ENCODE measurements at regions of chr1 and their contacts with region 1.

Region 1: DNA sequence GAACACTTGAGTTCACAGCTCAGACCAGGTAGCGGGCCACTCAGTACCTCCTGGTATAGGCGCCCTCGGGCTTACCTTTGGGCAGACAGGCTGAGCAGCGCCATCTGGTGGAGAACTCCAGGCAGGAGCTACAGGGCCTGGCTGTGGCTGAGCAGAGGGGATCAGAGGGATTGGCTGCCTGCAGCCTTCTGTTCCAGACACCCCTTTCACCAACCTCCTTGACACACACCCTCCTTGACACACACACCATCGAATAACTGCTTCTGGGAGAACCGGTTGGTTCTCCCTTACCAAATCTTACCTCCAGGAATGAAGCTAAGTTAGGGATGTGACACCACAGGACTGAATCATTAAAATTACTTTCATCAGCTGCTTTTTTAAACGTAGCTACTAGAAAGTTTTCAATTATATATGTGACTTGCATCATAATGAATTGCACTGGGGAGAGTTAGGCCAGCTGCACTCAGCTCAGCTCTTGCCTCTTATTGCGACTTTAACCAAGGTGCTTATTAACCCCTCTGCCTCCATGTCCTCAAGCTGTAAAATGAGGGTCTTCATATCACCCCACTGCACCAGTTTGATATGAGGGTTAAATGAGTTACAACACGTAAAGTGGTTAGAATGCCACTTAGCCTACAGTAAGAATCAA is 6.6 kb downstream of the LIN28A start:
- DNase-seq: peak; percentile 90
- ATAC-seq: peak; percentile 99
- H3K4me3 Mint-ChIP-seq: no peak overlapping the region
- H3K27ac Mint-ChIP-seq: no peak overlapping the region
- H3K4me1 Mint-ChIP-seq: peaks cover 2% of the 10 kb centered on the region
- H3K27me3 Mint-ChIP-seq: peaks cover 57% of the 10 kb centered on the region

Region 2: DNA sequence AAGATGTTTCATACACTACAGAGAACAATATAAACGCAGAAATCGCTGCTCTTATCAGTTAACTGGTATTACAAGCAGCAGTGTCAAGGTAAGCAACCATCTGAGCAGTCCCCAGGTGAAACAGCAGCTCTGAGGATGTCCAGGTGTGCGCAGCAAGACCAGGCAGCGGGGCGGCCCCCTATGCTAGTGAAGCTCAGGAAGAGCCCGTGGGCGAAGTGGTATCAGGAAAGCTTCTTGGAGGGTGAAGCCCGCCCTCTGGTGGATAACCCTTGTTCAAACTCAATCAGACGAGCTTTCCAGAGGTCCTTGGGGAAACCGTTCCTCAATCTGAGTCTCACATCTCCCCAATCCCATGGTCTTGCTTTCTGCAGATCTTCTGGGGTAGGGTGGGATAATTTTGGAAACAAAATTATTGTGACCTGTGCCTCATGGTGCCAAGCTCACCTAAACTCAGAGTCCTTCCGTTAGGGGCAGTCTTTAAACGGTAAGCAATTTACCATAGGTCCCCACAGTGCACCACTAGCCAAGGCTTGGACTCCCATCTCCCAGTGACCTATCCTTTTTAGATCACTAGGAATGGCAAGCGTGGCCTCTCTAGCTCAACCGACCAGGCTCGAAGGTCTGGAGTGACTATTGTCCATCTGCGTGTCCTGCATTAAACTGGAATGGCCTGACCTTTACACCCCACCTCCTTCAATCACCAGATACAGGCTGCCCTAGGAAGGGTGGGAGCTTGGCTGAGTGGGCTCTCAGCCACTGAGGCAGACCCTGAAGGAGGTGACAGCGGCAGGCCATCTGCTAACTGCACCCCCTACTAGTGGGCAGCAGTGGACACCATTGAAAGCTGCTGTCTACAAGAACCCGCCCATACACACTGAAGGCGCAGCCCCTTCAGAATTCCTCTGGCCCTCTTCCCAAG is 271.9 kb before region 1 on chr1:
- CTCF ChIA-PET with region 1: interaction called, 11 read pairs
- DNase-seq: peak; percentile 78
- ATAC-seq: peak; percentile 90
- H3K4me3 Mint-ChIP-seq: no peak overlapping the region
- H3K27ac Mint-ChIP-seq: no peak overlapping the region
- H3K4me1 Mint-ChIP-seq: peaks cover 2% of the 10 kb centered on the region
- H3K27me3 Mint-ChIP-seq: peaks cover 29% of the 10 kb centered on the region

Region 3: DNA sequence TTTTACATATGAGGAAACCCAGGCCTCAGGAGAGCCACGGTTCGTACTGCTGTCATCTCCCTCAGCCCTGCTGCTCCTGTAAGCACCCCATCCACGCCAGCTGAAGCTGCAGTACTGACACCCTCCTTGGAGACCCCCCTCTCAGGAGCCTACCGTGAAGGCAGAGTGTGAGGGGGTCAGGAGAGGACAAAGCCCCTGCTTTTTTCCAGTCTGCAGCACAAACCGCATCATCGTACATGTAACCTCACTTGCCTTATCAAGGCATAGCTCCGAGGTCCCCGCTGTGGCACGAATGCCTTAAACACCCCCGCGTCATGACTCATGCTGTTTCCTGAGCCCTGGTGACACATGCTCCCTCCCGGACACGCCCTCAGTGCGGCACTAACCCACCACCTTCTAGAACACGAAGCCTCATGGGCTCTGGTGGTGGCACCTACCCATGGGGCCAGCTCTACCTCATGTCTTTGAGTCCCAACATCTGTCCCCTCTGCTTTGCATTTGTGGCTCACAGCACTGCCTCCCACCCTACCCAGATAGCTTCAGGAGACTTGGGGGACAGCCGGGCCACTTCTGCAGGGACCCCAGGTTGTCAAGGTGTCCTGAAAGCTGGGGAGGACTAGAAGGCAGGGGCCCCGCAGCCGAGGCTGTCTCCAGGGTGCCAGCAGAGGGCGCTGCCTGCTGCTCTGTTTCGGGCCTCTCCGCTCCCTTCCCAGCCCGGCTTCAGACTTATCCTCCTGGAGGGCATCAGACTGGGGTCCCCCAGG is 132.5 kb before region 1 on chr1:
- CTCF ChIA-PET with region 1: interaction called, 59 read pairs
- DNase-seq: peak; percentile 99
- ATAC-seq: peak; percentile 71
- H3K4me3 Mint-ChIP-seq: peak overlapping the region; percentile 69
- H3K27ac Mint-ChIP-seq: peak overlapping the region; percentile 99
- H3K4me1 Mint-ChIP-seq: peaks cover 89% of the 10 kb centered on the region
- H3K27me3 Mint-ChIP-seq: no peaks in the 10 kb centered on the region

Region 4: DNA sequence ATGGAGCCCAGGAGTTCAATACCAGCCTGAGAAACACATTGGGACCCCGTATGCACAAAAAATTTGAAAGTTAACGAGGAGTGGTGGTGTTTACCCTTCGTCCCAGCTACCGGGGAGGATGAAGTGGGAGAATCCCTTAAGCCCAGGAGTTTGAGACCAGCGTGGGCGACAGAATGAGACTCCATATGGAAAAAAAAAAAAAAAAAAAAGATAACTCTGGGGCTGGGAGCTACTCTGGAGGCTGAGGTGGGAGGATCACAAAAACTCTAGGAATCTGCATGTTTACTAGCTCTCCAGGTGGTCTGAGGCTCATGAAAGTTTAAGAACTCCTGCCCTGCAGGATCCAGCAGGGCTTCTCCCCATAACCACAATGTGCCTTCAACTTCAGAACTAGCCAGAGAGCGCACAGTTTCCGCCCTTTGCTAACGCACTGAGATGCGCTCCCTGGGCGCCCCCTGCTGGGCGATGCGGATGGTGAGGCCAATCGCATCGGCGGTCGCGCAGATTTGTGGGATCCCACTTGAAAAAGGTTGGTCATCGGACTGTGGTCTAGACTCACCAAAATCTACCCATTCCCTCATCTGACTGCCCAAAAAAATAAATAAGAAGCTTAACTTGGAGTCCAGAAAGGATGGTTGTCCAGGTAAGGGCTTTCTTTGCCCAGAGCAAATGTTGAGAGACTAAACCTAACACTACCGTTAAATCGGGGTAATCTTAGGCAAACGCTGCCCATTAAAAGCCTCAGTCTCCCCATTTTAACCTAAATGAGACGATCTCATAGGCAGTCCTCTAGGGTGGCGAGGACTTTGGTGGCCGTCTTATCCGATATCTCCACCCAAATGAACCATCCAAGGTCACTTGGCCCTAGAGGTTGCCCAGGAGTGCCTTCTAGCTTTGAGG is 53.4 kb before region 1 on chr1:
- CTCF ChIA-PET with region 1: interaction called, 18 read pairs
- DNase-seq: peak; percentile 90
- ATAC-seq: peak; percentile 76
- H3K4me3 Mint-ChIP-seq: peak overlapping the region; percentile 7
- H3K27ac Mint-ChIP-seq: peak overlapping the region; percentile 72
- H3K4me1 Mint-ChIP-seq: peaks cover 53% of the 10 kb centered on the region
- H3K27me3 Mint-ChIP-seq: peaks cover 23% of the 10 kb centered on the region

Region 5: DNA sequence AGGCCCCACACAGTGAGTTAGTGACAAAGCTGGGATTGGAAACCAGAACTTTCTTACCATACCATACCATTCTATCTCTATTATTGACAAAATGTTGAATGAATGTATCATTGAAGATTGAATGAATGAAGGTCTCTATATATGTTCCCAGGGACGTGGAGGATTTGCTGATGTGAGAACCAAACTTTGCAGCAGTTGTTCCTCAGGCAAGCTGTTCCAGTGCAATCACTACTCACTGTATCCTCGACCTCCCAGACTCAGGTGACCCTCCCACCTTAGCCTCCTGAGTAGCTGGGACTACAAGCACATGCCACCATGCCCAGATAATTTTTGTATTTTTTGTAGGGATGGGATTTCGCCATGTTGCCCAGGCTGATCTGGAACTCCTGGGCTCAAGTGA is 18.2 kb before region 1 on chr1:
- CTCF ChIA-PET with region 1: interaction called, 25 read pairs
- DNase-seq: no peak
- ATAC-seq: no peak
- H3K4me3 Mint-ChIP-seq: no peak overlapping the region
- H3K27ac Mint-ChIP-seq: no peak overlapping the region
- H3K4me1 Mint-ChIP-seq: peaks cover 5% of the 10 kb centered on the region
- H3K27me3 Mint-ChIP-seq: peaks cover 20% of the 10 kb centered on the region

Region 6: GRCh38 chr1:26472901-26473845 is 55.9 kb after region 1 on chr1:
- CTCF ChIA-PET with region 1: interaction called, 22 read pairs
- DNase-seq: peak; percentile 97
- ATAC-seq: peak; percentile 74
- H3K4me3 Mint-ChIP-seq: peak overlapping the region; percentile 86
- H3K27ac Mint-ChIP-seq: peak overlapping the region; percentile 61
- H3K4me1 Mint-ChIP-seq: peaks cover 45% of the 10 kb centered on the region
- H3K27me3 Mint-ChIP-seq: no peaks in the 10 kb centered on the region

Measured in activated CD8-positive, alpha-beta memory T cell treated with anti-CD3 and anti-CD28 coated beads, Interleukin-2, amount 10 ng/mL, durations not matched to agents 7 days and 5 days (primary cell).